ENCODE measurements at regions of chr19 and their contacts with region 1.

Region 1: DNA sequence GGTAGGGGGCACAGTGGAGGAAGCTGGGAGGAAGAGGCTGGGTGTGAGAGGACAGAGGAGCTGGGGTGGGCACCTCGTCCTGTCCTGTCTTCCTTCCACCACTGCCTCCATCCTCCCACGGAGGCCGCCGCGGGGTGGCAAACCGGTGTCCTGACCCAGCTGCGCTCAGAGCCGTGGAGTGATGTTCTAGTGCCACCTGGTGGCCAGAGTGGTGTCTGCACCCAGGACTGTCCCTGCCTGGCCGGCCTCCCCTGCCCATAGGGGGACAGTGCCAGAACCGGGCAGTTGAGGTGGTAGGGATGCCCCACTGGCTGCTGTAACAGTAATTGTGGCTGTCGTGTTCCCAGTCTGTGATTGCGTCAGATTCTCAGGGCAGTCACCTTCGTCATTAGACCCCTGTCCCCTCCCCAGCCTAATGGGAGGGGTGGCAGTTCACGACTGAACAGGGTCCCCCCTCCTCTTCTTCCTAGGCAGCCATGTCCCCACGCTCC is 11.1 kb upstream of the ARRDC2 start:
- DNase-seq: peak; percentile 96

Region 2: GRCh38 chr19:17772172-17772571 is 224.7 kb before region 1 on chr19:
- intact Hi-C with region 1: loop called in 1 of 2 experiments (anchors 5 kb)
- DNase-seq: no peak

Region 3: GRCh38 chr19:17859533-17860330 is 137.1 kb before region 1 on chr19 and contains the start of gene RPL18A:
- intact Hi-C with region 1: loop called in 1 of 2 experiments (anchors 5 kb)
- DNase-seq: peak; percentile 99
- total RNA-seq, gene RPL18A: 1,284 to 1,308 TPM

Region 4: GRCh38 chr19:17938092-17938845 is 58.6 kb before region 1 on chr19:
- intact Hi-C with region 1: loop called (anchors 2 to 5 kb)
- DNase-seq: peak; percentile 96

Region 5: DNA sequence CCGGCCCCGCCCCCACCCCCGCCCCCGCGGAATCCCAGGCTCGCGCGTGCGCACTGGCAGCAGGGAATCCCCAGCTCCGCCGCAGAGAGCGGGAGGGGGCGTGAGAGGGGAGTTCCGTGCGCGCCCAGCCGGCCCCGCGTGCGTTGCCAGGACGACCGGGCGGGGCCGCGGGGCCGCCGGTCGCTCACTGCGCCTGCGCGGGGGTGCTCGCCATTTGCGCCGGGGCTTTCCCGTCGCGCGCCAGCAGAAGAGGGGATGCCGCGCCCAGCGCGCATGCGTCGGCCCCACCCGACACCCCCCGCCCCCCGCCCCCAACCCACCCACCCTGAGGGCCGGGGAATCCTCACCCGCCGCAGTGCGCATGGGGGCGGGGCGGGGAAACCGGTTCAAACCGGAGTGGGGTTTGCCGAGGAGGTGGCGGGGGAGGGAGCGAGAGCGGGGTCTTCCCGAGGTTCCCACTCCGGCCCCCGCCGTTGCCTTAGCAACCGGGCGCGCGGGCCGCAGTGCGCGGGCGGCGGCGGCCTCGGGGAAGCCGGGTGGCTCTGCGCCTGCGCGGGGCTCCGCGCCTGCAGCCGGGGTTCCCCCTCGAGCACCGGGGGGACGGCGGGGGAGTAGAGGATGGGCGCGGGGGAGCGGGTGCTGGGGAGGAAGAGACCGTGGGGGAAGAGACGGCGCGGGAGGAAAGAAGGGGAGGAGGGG is 48.9 kb before region 1 on chr19:
- intact Hi-C with region 1: loop called in 1 of 2 experiments (anchors 5 kb)
- DNase-seq: peak; percentile 97

Region 6: DNA sequence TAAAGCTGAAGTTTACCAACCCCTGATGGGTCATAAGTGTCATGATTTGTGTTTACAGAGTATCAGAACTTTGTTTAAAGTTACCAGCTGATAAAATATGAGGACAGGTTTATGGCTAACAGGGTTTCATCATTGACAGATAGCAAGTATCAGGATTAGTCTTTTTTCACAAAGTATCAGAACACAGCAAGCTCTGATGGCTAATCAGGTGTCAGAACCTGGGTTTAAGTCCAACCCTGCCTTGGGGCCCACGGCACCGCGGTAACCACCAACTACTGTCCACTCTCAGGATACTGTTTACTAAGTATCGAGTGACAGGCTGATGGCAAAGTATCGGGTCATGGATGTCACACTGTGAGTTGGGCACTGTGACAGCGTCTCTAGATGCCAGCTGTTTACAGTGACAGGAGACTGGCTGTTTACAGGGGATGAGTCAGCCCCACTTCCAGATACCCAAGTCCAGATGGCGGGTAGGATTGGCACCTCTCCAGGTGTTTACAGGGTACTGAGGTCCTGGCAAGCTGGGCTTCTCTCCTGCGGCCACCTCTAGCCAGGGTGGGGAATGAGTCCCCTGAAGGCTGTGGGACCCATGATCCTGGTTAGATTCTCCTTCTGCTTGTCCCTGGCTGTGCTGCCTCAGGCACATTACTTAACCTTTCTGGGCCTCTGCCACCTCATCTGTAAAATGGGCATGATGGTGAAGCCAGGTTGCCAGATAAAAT is 32.9 kb after region 1 on chr19:
- intact Hi-C with region 1: no loop called
- DNase-seq: no peak

Measured in posterior vena cava (tissue), 2 donors.